ENCODE measurements at regions of chr18 and their contacts with region 1.

Region 1: DNA sequence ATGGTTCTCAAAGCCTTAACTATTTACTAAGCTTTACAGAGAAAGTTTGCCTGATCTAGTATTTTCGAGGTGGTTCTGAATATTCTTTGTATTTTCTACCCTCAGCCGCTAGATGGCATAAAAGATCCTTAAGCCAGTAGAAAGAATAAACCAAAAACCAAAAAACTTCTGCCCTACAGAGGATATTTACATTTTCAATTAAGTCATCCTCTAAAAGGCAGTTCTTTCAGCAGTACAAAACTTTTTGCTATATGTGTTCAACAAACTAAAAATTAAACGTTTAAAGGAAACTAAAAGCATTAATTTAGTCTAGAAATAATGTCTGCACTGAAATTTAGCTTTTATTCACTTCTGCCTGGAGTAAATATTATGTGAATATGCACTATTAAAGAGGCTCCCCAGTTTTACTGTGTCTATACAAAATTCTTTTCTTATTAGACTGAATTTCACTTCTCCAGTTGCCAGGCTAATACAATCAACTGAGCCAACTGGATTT is 297.5 kb downstream of the PIEZO2 start:
- DNase-seq: no peak
- ATAC-seq: no peak
- H3K4me3 ChIP-seq: no peak overlapping the region
- H3K27ac ChIP-seq: no peak overlapping the region
- H3K4me1 ChIP-seq: no peaks in the 10 kb centered on the region
- H3K27me3 ChIP-seq: no peaks in the 10 kb centered on the region
- CTCF ChIP-seq: peak; percentile 81

Region 2: GRCh38 chr18:11040823-11041656 is 189.2 kb after region 1 on chr18:
- intact Hi-C with region 1: loop called (anchors 1 to 5 kb)
- DNase-seq: no peak
- ATAC-seq: peak in 3 of 4 donors; percentile 51 to 64 (median 61)
- H3K4me3 ChIP-seq: no peak overlapping the region
- H3K27ac ChIP-seq: no peak overlapping the region
- H3K4me1 ChIP-seq: no peaks in the 10 kb centered on the region
- H3K27me3 ChIP-seq: peaks cover 0 to 2% (median 0%) of the 10 kb centered on the region in 3 donors
- CTCF ChIP-seq: peak; percentile 81

Region 3: GRCh38 chr18:11071300-11071699 is 219.4 kb after region 1 on chr18:
- intact Hi-C with region 1: no loop called
- DNase-seq: no peak
- ATAC-seq: no peak
- H3K4me3 ChIP-seq: no peak overlapping the region
- H3K27ac ChIP-seq: no peak overlapping the region
- H3K4me1 ChIP-seq: no peaks in the 10 kb centered on the region
- H3K27me3 ChIP-seq: no peaks in the 10 kb centered on the region
- CTCF ChIP-seq: no peak

Region 4: GRCh38 chr18:11149441-11150270 is 297.8 kb after region 1 on chr18 and contains the start of gene PIEZO2:
- intact Hi-C with region 1: loop called in 1 of 2 experiments (anchors 5 kb)
- DNase-seq: peak; percentile 71 to 73
- ATAC-seq: peak; percentile 77 to 96 (median 94)
- H3K4me3 ChIP-seq: peak within 1 kb of the TSS; percentile 72
- H3K27ac ChIP-seq: no peak within 1 kb of the TSS
- H3K4me1 ChIP-seq: no peaks in the 10 kb centered on the region
- H3K27me3 ChIP-seq: peaks cover 0 to 31% (median 16%) of the 10 kb centered on the region in 3 donors
- CTCF ChIP-seq: no peak
- total RNA-seq, gene PIEZO2: 0.06 to 0.64 (median 0.17) TPM

Region 5: DNA sequence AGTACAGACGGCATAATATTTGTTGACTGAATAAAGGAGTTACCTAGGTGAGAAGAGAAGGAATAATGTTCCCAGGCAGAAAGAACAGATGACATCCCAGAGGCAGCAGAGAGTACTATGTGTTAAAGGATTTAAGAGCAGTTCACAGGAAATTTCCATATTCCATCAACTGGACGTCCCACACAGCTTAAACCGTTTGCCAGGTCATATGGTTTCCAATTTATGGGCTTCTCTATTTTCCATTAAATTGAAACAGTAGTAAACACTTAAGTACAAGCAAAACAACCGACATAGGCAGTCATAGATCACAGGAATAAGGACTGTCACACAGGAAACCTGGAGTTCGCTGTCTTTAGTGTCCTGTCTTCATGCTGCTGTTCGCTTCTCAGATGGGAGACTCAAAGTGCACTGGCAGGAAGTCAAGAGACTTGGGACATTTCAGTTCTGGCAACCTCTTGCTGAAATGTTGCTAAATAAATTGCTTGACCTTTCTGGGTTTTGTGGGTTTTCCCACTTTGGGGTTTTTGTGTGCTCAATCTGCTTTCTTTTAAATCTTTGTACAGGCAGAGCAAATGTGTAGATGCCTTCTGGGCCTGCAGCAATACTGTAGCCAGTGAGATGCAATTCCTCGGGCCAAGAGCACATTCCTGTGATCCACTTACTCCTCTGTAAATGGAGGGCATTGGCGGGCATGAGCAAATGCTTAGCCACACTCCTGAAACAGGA is 303.3 kb after region 1 on chr18:
- intact Hi-C with region 1: loop called (anchors 5 kb)
- DNase-seq: no peak
- ATAC-seq: no peak
- H3K4me3 ChIP-seq: no peak overlapping the region
- H3K27ac ChIP-seq: no peak overlapping the region
- H3K4me1 ChIP-seq: no peaks in the 10 kb centered on the region
- H3K27me3 ChIP-seq: peaks cover 0 to 4% (median 2%) of the 10 kb centered on the region in 3 donors
- CTCF ChIP-seq: no peak

Region 6: DNA sequence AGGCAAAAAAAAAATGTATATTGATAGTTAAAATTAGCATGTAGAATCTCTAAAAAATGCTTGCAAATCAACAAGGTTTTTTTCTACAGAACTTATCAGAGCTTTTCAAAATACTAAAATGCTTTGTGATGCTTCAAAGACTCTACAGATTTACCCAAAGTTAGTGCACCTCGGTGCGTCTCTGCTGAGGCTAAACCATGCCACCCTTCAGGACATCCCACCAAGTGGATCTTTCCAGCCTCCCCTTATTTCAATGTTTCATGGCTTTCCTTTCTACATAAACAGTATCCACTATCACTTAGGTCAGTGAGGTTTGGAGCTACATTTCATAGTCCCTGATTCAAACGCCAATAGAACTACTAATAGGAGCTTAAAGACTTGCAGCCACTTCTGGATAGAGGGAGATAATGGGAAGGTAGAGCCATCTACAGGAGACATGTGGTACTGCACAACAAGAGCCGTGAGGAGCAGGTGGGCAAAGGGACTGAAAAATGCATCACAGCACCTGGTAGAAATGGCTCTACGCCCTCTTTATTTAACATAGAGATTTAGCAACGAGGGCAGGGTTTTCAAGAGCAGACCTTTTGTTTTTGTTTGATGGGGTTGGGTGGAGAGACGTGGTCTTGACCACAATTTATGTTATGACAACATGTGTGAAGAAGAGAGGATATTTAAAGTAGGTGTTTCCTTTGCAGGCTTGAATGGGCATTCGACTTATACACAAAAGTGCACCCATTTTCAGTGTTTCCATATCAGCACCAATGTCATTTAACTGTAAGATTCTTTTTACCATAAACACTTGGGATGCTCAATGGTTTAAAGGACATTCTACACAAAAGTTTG is 701.4 kb after region 1 on chr18:
- intact Hi-C with region 1: loop called (anchors 5 kb)
- DNase-seq: no peak
- ATAC-seq: peak; percentile 71 to 83 (median 80)
- H3K4me3 ChIP-seq: no peak overlapping the region
- H3K27ac ChIP-seq: no peak overlapping the region
- H3K4me1 ChIP-seq: no peaks in the 10 kb centered on the region
- H3K27me3 ChIP-seq: peaks cover 0 to 11% (median 0%) of the 10 kb centered on the region in 3 donors
- CTCF ChIP-seq: peak; percentile 92

Measured in psoas muscle (tissue), 8 donors.